B cell (primary cell): ENCODE measurements at regions of chr16 and their contacts with region 1.

Region 1: DNA sequence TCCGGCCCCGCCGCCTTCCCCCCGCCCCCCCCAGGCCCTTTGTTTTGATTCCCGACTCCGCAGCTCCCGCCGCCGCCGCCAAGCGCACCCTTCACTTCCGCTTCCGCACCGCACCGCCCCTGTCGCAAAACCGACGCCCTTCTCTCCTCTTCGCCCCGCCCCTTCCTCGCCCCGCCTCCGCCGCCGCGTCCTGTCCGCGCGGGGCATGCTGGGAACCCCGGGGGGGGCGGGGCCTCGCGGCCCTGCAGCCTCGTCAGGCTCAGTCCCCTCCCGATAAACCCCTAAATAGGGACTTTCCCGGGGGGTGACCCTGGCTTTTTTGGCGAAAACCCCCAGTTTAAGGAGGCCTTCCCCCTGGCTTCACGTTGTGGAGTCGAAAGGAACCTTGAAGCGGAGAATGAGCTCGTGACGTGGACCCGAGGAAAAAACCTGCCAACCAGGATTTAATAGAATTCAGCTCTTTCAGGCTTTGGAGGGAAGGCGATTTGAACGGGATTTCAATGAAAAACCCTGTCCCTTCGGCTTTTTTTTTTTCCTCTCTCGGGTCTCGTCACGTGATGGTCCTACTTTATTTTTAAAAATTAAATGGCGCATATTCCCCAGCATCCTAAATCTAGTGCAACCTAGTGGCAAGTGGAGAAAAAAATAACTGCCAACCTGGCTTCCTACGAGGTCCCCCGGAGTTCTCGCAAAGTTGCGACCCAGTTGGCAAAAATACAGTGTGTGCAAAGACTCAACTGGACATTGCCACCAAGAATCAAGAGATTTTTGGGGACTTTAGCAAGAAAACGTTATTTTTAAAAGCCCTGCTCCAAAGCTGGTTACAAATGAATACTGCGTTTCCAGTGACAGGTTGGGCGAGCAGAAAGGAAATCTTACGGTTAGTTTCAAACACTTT is at the start of gene MARF1:
- DNase-seq: peak; percentile 99
- ATAC-seq: peak; percentile 70
- H3K4me3 ChIP-seq: peak within 1 kb of the TSS; percentile 87 to 96 (median 90)
- H3K4me3 Mint-ChIP-seq: peak within 1 kb of the TSS; percentile 95
- H3K27ac ChIP-seq: peak within 1 kb of the TSS; percentile 93 to 100
- H3K27ac Mint-ChIP-seq: peak within 1 kb of the TSS; percentile 98
- H3K4me1 ChIP-seq: peaks cover 40 to 46% of the 10 kb centered on the region in 2 donors
- H3K4me1 Mint-ChIP-seq: peaks cover 50% of the 10 kb centered on the region
- H3K27me3 ChIP-seq: no peaks in the 10 kb centered on the region
- H3K27me3 Mint-ChIP-seq: no peaks in the 10 kb centered on the region
- CTCF ChIP-seq: peak; percentile 38
- total RNA-seq, gene MARF1: 366 and 402 TPM in 2 replicates

Region 2: DNA sequence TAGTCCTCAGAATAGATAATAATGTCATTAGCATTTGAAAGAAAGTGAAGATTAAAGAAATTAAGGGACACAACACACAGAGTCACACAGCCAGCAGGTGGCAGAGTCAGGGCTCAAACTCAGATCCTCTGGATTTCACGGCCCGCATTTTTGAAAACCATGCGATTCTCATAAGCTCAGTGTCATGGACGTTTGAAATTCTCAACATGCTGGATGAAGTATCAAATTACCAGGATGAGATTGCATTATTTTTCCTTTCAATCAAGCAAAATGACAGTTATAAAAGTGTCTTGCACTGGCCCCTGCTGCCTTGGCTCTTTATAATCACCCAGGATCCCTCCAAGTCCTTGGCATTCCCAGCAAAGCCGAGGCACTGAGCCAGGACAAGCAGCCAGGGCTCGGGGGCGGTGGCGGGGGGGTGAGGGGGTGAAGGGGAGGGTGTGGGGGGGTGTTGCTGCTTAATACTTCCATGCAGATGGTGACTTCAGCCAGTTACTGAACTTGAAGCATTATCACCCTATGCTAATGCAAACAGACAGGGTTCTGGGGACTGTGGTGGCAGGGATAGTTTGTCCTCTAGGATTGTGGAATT is 215.6 kb before region 1 on chr16:
- CTCF ChIA-PET with region 1: interaction called, 24 read pairs
- POLR2A ChIA-PET with region 1: no interaction called
- intact Hi-C with region 1: loop called (anchors 1 kb)
- DNase-seq: peak; percentile 61
- ATAC-seq: peak; percentile 56
- H3K4me3 ChIP-seq: no peak overlapping the region
- H3K4me3 Mint-ChIP-seq: no peak overlapping the region
- H3K27ac ChIP-seq: no peak overlapping the region
- H3K27ac Mint-ChIP-seq: no peak overlapping the region
- H3K4me1 ChIP-seq: peaks cover 0 to 3% of the 10 kb centered on the region in 2 donors
- H3K4me1 Mint-ChIP-seq: peaks cover 3% of the 10 kb centered on the region
- H3K27me3 ChIP-seq: no peaks in the 10 kb centered on the region
- H3K27me3 Mint-ChIP-seq: peaks cover 14% of the 10 kb centered on the region
- CTCF ChIP-seq: peak; percentile 63

Region 3: GRCh38 chr16:15607700-15608396 is 35.4 kb before region 1 on chr16:
- CTCF ChIA-PET with region 1: interaction called, 14 read pairs
- POLR2A ChIA-PET with region 1: interaction called, 3 read pairs
- intact Hi-C with region 1: no loop called
- DNase-seq: no peak
- ATAC-seq: no peak
- H3K4me3 ChIP-seq: no peak overlapping the region
- H3K4me3 Mint-ChIP-seq: no peak overlapping the region
- H3K27ac ChIP-seq: no peak overlapping the region
- H3K27ac Mint-ChIP-seq: no peak overlapping the region
- H3K4me1 ChIP-seq: no peaks in the 10 kb centered on the region
- H3K4me1 Mint-ChIP-seq: no peaks in the 10 kb centered on the region
- H3K27me3 ChIP-seq: no peaks in the 10 kb centered on the region
- H3K27me3 Mint-ChIP-seq: no peaks in the 10 kb centered on the region
- CTCF ChIP-seq: no peak

Region 4: GRCh38 chr16:15658149-15658548 is 14.9 kb after region 1 on chr16:
- CTCF ChIA-PET with region 1: interaction called, 16 read pairs
- POLR2A ChIA-PET with region 1: interaction called, 17 read pairs
- intact Hi-C with region 1: no loop called
- DNase-seq: no peak
- ATAC-seq: peak; percentile 19
- H3K4me3 ChIP-seq: no peak overlapping the region
- H3K4me3 Mint-ChIP-seq: peak overlapping the region; percentile 49
- H3K27ac ChIP-seq: peak overlapping the region; percentile 72 to 89
- H3K27ac Mint-ChIP-seq: peak overlapping the region; percentile 86
- H3K4me1 ChIP-seq: peaks cover 26 to 36% of the 10 kb centered on the region in 2 donors
- H3K4me1 Mint-ChIP-seq: peaks cover 62% of the 10 kb centered on the region
- H3K27me3 ChIP-seq: no peaks in the 10 kb centered on the region
- H3K27me3 Mint-ChIP-seq: no peaks in the 10 kb centered on the region
- CTCF ChIP-seq: no peak

Region 5: DNA sequence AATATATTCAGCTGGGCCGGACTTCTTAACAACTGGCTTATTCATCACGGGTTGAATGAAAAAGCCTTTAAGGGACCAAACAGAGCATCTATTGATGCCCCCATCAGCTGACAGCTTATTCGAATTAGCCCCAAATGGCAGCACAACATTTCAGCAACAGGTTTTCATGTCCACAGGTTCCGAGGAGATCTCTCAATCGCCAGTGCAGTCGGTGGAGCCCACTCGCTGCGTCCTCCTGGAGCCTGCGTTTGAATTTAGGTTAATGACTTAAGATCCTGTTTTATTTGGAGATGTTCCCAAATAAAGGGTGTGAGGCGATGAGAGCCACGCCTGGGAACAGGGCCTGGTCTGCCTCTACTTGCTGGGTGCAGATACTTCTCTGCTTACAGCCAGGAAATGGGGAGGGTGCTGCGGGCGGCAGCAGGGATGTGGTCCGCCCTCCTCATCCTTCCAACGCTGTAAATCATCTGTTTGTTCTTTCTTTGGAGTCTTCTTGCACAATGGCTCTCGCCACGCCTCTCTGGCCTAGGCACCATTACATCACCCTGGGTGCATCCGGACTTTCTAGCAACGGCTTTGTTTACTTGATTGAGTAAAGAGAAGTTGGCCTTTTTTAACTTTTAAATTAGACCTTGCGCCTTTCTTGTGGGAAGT is 29.3 kb after region 1 on chr16:
- CTCF ChIA-PET with region 1: interaction called, 6 read pairs
- POLR2A ChIA-PET with region 1: interaction called, 10 read pairs
- intact Hi-C with region 1: loop called (anchors 5 kb)
- DNase-seq: peak; percentile 74
- ATAC-seq: peak; percentile 90
- H3K4me3 ChIP-seq: peak overlapping the region in 2 of 5 experiments; percentile 1 to 6
- H3K4me3 Mint-ChIP-seq: peak overlapping the region; percentile 59
- H3K27ac ChIP-seq: peak overlapping the region; percentile 87 to 95
- H3K27ac Mint-ChIP-seq: peak overlapping the region; percentile 92
- H3K4me1 ChIP-seq: peaks cover 19 to 20% of the 10 kb centered on the region in 2 donors
- H3K4me1 Mint-ChIP-seq: peaks cover 38% of the 10 kb centered on the region
- H3K27me3 ChIP-seq: no peaks in the 10 kb centered on the region
- H3K27me3 Mint-ChIP-seq: no peaks in the 10 kb centered on the region
- CTCF ChIP-seq: no peak

Region 6: GRCh38 chr16:15988268-15989013 is 345.1 kb after region 1 on chr16:
- CTCF ChIA-PET with region 1: no interaction called
- POLR2A ChIA-PET with region 1: no interaction called
- intact Hi-C with region 1: no loop called
- DNase-seq: no peak
- ATAC-seq: no peak
- H3K4me3 ChIP-seq: no peak overlapping the region
- H3K4me3 Mint-ChIP-seq: no peak overlapping the region
- H3K27ac ChIP-seq: no peak overlapping the region
- H3K27ac Mint-ChIP-seq: no peak overlapping the region
- H3K4me1 ChIP-seq: no peaks in the 10 kb centered on the region
- H3K4me1 Mint-ChIP-seq: peaks cover 45% of the 10 kb centered on the region
- H3K27me3 ChIP-seq: no peaks in the 10 kb centered on the region
- H3K27me3 Mint-ChIP-seq: no peaks in the 10 kb centered on the region
- CTCF ChIP-seq: no peak